Right cardiac atrium (tissue), 5 donors: ENCODE measurements at regions of chr6 and their contacts with region 1.

Region 1: GRCh38 chr6:3281631-3282475 is 23.1 kb downstream of the PSMG4 start:
- DNase-seq: peak in 2 of 3 donors; percentile 46 to 60
- ATAC-seq: peak; percentile 24 to 67
- H3K4me3 ChIP-seq: no peak overlapping the region
- H3K27ac ChIP-seq: peak overlapping the region; percentile 22
- H3K4me1 ChIP-seq: no peaks in the 10 kb centered on the region
- H3K27me3 ChIP-seq: no peaks in the 10 kb centered on the region

Region 2: GRCh38 chr6:3456755-3457466 is 175.1 kb after region 1 on chr6 and contains the start of gene SLC22A23:
- intact Hi-C with region 1: loop called in 2 of 4 experiments (anchors 5 to 10 kb)
- DNase-seq: peak; percentile 45 to 84 (median 80)
- ATAC-seq: peak; percentile 80 to 83
- H3K4me3 ChIP-seq: peak within 1 kb of the TSS; percentile 95
- H3K27ac ChIP-seq: no peak within 1 kb of the TSS
- H3K4me1 ChIP-seq: peaks cover 2% of the 10 kb centered on the region
- H3K27me3 ChIP-seq: no peaks in the 10 kb centered on the region
- total RNA-seq, gene SLC22A23: 2.8 to 6.4 (median 3.3) TPM

Region 3: GRCh38 chr6:3990692-3991501 is 709.0 kb after region 1 on chr6:
- intact Hi-C with region 1: loop called in 1 of 4 experiments (anchors 10 kb)
- DNase-seq: peak; percentile 91 to 94 (median 93)
- ATAC-seq: peak; percentile 92 to 96
- H3K4me3 ChIP-seq: peak overlapping the region; percentile 50
- H3K27ac ChIP-seq: peak overlapping the region; percentile 53
- H3K4me1 ChIP-seq: peaks cover 6% of the 10 kb centered on the region
- H3K27me3 ChIP-seq: no peaks in the 10 kb centered on the region